ENCODE measurements at regions of chr11 and their contacts with region 1.

Region 1: DNA sequence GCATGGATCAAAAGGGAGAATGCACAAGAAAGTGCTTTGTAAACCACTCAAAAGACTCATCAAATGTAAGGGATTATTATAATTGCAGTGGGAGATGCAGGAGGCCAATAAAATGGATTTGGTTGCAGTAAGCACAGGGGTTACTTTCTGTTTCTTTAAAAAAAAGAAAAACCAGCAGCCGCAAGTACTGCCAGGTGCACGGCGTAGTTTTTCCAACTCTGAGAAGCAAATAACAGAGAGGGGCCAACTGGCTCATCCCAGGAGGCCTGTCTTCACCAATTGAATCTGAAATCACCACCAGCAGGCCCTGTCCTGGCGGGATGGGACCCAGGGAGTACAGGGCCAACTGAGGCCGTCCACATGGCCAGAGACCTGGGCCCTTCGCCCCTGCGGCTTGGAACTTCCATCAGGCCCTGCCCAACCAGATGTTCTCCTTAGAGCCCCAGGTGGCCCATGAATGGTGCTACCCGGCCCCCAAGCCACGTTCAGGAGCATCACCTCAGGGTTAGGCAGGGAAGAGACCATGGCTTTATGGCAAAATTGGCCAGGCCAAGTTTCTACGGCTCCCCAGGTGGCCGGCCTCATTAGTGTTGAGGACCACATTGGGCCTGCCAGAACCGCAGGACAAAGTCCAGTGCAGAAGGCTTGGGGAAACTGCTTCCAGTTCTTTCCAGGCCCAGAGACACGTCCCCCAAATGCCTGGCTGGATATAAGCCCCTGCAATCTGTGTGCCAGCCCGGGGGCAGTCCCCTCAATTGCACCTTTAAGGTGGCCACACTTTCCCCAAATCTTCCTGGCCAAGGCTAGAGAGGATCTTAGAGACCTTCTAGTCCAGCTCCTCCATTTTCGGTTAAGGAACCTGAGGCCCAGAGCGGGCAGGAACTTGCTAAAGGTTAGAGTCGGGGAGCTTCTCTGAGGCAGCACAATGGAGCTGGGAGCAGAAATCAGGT is 61.7 kb downstream of the CHRDL2 start:
- DNase-seq: no peak
- H3K4me3 ChIP-seq: no peak overlapping the region
- H3K27ac ChIP-seq: no peak overlapping the region
- H3K4me1 ChIP-seq: peaks cover 0 to 6% of the 10 kb centered on the region in 2 donors
- H3K27me3 ChIP-seq: no peaks in the 10 kb centered on the region
- CTCF ChIP-seq: no peak
- POLR2A ChIP-seq: no peak

Region 2: GRCh38 chr11:74644081-74644480 is 25.4 kb before region 1 on chr11:
- intact Hi-C with region 1: loop called (anchors 2 kb)
- DNase-seq: no peak
- H3K4me3 ChIP-seq: no peak overlapping the region
- H3K27ac ChIP-seq: no peak overlapping the region
- H3K4me1 ChIP-seq: no peaks in the 10 kb centered on the region
- H3K27me3 ChIP-seq: no peaks in the 10 kb centered on the region
- CTCF ChIP-seq: no peak
- POLR2A ChIP-seq: no peak

Region 3: DNA sequence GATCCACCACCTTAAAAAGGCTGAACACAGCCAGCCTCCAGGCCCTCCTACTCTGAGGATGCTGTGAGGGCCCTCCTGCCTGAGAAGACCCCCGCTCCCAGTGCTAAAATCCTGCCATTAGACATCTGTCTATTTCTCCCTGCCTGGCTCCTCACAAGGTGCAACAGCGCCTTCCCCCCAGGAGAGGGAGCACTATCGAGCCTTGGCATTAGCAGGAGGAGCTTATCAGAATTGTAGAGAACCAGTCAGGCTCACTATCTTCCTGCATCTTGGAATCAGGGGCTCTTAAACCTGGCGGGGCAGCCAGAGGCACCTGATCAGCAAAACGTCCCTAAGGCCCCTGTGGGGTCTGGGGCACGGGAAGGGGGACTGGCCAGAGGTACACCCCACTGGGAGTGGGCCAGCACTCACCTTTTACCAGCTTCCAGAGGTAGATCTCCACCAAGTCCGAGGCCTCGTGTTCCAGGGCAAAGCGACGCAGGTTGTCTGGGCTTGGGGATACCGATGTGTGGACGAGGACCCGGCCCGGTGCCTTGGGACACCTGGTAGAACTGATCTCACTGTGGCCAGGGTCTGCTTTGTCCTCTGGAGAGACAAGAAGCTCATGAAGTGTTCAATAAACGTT is 33.0 kb after region 1 on chr11:
- intact Hi-C with region 1: no loop called
- DNase-seq: peak in 1 of 2 donors; percentile 47
- H3K4me3 ChIP-seq: no peak overlapping the region
- H3K27ac ChIP-seq: no peak overlapping the region
- H3K4me1 ChIP-seq: no peaks in the 10 kb centered on the region
- H3K27me3 ChIP-seq: no peaks in the 10 kb centered on the region
- CTCF ChIP-seq: peak; percentile 27 to 74 (median 65)
- POLR2A ChIP-seq: no peak

Measured in breast epithelium (tissue), 4 donors.